RWPE1 (cell line): ENCODE measurements at regions of chr10 and their contacts with region 1.

Region 1: GRCh38 chr10:14773551-14774213 is 1.0 kb downstream of the FAM107B start:
- DNase-seq: no peak
- H3K27ac ChIP-seq: no peak overlapping the region
- CTCF ChIP-seq: no peak

Region 2: DNA sequence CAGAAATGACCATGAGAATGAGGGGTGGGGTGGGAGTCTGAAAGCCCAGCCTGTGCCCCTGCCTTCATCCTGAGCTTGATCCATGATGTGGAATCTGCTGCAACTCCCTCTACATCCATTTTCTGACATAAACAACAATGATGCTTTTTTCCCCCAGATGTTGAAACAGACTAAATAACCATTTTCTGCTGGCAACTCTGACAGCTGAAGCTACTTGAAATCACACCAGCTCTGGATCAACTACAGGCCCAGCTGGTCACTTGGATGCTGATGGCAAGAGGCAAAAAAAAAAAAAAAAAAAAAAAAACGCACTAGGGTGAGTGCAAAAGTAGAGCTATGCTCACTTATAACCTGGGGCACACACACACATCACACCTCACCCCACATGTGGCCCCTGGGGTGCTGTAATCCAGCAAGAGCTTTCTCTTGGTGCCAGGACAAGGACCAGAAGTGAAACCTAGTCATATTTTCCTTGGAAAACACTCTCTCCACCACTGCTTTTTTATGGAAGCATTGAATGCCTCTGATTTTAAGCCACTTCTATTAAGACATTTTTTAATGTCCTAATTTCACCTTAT is 73.0 kb before region 1 on chr10:
- CTCF ChIA-PET with region 1: no interaction called
- POLR2A ChIA-PET with region 1: interaction called, 10 read pairs
- DNase-seq: no peak
- H3K27ac ChIP-seq: no peak overlapping the region
- CTCF ChIP-seq: no peak